ENCODE measurements at regions of chr18 and their contacts with region 1.

Region 1: DNA sequence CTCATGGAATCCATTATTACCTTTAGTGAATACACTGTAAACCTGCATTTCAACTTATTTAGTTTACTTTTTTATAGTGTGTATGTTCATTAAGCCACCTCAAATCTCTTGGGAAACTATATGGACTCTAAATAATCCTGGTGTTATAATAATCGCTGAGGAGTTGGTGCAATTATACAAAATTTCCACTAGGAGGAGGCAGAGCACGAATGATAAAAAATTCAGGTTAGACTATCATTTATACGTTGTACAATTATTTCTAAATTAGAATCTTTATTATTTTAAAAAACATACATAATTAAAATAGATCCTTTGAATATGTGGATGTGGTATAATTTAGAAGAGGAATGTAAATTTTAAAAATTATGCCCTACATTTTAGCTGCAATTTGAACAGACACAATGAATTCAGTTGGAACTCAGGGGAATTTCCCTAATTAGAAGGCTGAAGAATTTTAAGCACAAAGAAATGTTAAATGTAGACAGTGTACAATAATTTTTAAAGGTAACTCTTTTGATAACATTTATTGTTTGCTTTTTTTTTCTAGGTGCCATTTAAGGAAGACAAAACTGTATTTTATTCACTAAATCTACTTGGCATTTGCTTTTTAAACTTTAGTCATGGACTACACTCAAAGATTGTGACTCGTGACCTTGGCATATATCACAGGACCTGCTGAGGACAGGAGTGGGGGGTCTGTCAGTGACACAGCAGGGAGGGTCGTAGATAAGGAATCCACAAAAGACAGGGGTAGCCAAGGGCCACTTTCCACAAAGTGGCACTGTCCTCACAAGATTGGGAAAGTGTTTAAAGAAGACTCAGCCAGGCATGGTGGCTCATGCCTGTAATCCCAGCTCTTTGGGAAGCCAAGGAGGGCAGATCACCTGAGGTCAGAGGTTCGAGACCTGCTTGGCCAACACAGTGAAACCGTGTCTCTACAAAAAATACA is 45.5 kb downstream of the RAB12 start:
- DNase-seq: no peak
- H3K4me3 Mint-ChIP-seq: no peak overlapping the region
- H3K27ac Mint-ChIP-seq: no peak overlapping the region
- H3K4me1 Mint-ChIP-seq: no peaks in the 10 kb centered on the region
- H3K27me3 Mint-ChIP-seq: peaks cover 14% of the 10 kb centered on the region

Region 2: GRCh38 chr18:8423051-8423557 is 231.7 kb before region 1 on chr18:
- CTCF ChIA-PET with region 1: no interaction called
- POLR2A ChIA-PET with region 1: no interaction called
- intact Hi-C with region 1: no loop called
- DNase-seq: no peak
- H3K4me3 Mint-ChIP-seq: no peak overlapping the region
- H3K27ac Mint-ChIP-seq: no peak overlapping the region
- H3K4me1 Mint-ChIP-seq: no peaks in the 10 kb centered on the region
- H3K27me3 Mint-ChIP-seq: no peaks in the 10 kb centered on the region

Region 3: GRCh38 chr18:8643326-8643878 is 11.4 kb before region 1 on chr18:
- CTCF ChIA-PET with region 1: interaction called, 13 read pairs
- POLR2A ChIA-PET with region 1: no interaction called
- intact Hi-C with region 1: no loop called
- DNase-seq: no peak
- H3K4me3 Mint-ChIP-seq: no peak overlapping the region
- H3K27ac Mint-ChIP-seq: no peak overlapping the region
- H3K4me1 Mint-ChIP-seq: peaks cover 3% of the 10 kb centered on the region
- H3K27me3 Mint-ChIP-seq: peaks cover 11% of the 10 kb centered on the region

Region 4: DNA sequence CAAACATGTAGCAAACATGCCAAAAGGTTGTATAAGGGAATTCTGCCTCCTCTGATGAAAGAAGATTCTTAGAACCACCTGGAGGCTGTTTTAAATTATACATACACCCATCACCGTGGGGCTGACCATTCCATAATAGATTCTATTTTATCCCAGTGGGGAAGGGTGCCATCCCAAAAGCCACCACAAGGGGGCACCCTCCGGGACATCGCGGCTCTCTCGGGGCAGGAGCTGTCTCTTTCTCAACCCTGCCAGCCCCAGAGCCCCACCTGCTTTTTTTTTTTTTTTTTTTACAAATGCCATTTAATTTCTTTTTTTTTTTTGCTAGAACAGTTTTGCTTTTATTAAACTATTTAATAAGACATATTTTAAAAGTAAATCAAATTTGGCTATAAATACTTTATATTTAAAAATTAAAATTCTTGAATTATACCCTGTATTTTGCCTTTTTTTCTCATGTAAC is 42.0 kb after region 1 on chr18:
- CTCF ChIA-PET with region 1: interaction called, 20 read pairs
- POLR2A ChIA-PET with region 1: no interaction called
- intact Hi-C with region 1: no loop called
- DNase-seq: peak; percentile 82
- H3K4me3 Mint-ChIP-seq: no peak overlapping the region
- H3K27ac Mint-ChIP-seq: no peak overlapping the region
- H3K4me1 Mint-ChIP-seq: no peaks in the 10 kb centered on the region
- H3K27me3 Mint-ChIP-seq: peaks cover 9% of the 10 kb centered on the region

Region 5: GRCh38 chr18:8982416-8983184 is 327.8 kb after region 1 on chr18:
- CTCF ChIA-PET with region 1: interaction called, 62 read pairs
- POLR2A ChIA-PET with region 1: no interaction called
- intact Hi-C with region 1: no loop called
- DNase-seq: peak; percentile 24
- H3K4me3 Mint-ChIP-seq: no peak overlapping the region
- H3K27ac Mint-ChIP-seq: no peak overlapping the region
- H3K4me1 Mint-ChIP-seq: no peaks in the 10 kb centered on the region
- H3K27me3 Mint-ChIP-seq: no peaks in the 10 kb centered on the region

Region 6: GRCh38 chr18:8988261-8988871 is 333.6 kb after region 1 on chr18:
- CTCF ChIA-PET with region 1: interaction called, 62 read pairs
- POLR2A ChIA-PET with region 1: no interaction called
- intact Hi-C with region 1: loop called (anchors 1 kb)
- DNase-seq: peak; percentile 68
- H3K4me3 Mint-ChIP-seq: no peak overlapping the region
- H3K27ac Mint-ChIP-seq: no peak overlapping the region
- H3K4me1 Mint-ChIP-seq: no peaks in the 10 kb centered on the region
- H3K27me3 Mint-ChIP-seq: peaks cover 14% of the 10 kb centered on the region

Region 7: GRCh38 chr18:9516437-9517064 is 861.8 kb after region 1 on chr18:
- CTCF ChIA-PET with region 1: interaction called, 3 read pairs
- POLR2A ChIA-PET with region 1: no interaction called
- intact Hi-C with region 1: loop called (anchors 2 kb)
- DNase-seq: no peak
- H3K4me3 Mint-ChIP-seq: no peak overlapping the region
- H3K27ac Mint-ChIP-seq: no peak overlapping the region
- H3K4me1 Mint-ChIP-seq: peaks cover 3% of the 10 kb centered on the region
- H3K27me3 Mint-ChIP-seq: no peaks in the 10 kb centered on the region

Measured in activated CD4-positive, alpha-beta memory T cell treated with anti-CD3 and anti-CD28 coated beads for 36 hours (primary cell).